IMR-90 (cell line): ENCODE measurements at regions of chr4 and their contacts with region 1.

Region 1: GRCh38 chr4:1346781-1347409 is at the start of gene UVSSA:
- DNase-seq: peak; percentile 99
- ATAC-seq: peak; percentile 91
- H3K4me3 ChIP-seq: peak within 1 kb of the TSS; percentile 84
- H3K27ac ChIP-seq: peak within 1 kb of the TSS; percentile 94
- H3K4me1 ChIP-seq: peaks cover 5% of the 10 kb centered on the region
- H3K27me3 ChIP-seq: no peaks in the 10 kb centered on the region
- CTCF ChIP-seq: no peak
- POLR2A ChIP-seq: no peak; the same call in none of the 2 replicates
- RAD21 ChIP-seq: no peak
- total RNA-seq, gene UVSSA: 1.4 TPM in 2 replicates

Region 2: DNA sequence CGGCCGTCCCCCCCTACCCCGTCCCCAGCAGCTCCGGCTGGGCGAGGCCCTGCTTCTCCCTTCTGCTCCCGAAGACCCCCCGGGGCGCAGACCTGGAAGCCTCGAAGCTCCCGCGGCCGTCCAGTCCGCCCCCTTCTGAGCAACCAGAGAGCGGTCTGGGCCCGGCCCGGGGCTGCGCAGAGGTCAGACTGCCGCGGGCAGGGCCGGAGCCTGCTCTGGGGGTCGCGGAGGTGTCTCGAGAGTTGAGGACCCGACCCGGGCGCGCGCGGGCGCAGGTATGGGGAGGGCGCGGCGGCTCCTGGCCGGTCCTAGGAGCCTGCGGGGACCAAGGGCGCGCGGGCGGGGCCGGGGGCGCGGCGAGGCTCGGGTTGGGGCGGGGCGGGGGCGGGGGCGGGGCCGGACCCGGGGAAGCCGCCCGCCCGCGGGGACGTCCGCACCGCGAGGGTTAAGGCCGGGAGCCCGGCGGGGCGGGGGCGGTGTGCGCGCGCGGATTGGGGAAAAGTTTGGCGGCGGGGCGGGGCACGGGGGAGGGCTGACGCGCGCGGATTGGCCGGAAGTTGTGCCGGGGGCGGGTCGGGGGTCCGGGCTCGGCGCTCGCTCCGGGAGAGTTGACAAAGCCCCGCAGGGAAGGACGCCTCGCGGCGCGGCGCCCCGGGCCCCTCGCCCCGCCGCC is 335.7 kb before region 1 on chr4 and contains the start of gene FGFRL1:
- CTCF ChIA-PET with region 1: no interaction called
- POLR2A ChIA-PET with region 1: no interaction called
- dilution Hi-C with region 1: no loop called
- in situ Hi-C with region 1: no loop called
- intact Hi-C with region 1: loop called (anchors 5 kb)
- DNase-seq: peak; percentile 77
- ATAC-seq: peak; percentile 76
- H3K4me3 ChIP-seq: peak within 1 kb of the TSS; percentile 50
- H3K27ac ChIP-seq: no peak within 1 kb of the TSS; the same call in 1 of the 2 replicates
- H3K4me1 ChIP-seq: peaks cover 13% of the 10 kb centered on the region
- H3K27me3 ChIP-seq: peaks cover 22% of the 10 kb centered on the region
- CTCF ChIP-seq: no peak
- POLR2A ChIP-seq: peak; percentile 62; the same call in 1 of the 2 replicates
- RAD21 ChIP-seq: no peak
- total RNA-seq, gene FGFRL1: 43.3 and 49.3 TPM in 2 replicates

Region 3: DNA sequence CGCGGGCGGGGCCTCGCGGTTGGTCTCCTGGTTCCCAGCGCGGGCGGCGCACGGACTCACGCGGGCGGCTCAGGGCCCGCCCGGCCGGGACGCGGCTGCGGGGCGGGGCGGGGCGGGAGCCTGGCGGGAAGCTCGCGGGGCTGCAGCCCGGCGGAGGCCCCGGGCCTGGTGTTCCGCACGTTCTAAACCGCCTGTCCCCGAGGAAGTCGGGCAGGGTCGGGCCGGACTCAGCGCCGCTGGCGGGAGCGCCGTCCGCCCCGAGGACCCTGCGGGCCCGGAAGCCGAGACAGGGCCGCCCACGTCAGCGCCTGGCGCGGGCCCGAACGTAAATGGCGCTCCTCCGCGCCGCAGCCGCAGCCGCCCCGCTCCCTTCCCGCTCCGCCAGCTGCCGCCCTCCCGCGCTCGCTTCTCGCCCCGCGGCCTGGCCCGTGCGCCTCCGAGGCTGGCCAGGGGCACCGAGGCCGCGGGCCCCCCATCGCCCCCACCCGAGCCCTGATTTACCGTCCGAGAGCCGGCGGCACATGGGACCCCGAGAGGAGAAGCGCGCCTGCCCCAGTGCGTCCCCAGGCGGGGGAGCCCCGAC is 97.7 kb before region 1 on chr4:
- CTCF ChIA-PET with region 1: no interaction called
- POLR2A ChIA-PET with region 1: interaction called, 3 read pairs
- dilution Hi-C with region 1: no loop called
- in situ Hi-C with region 1: no loop called
- intact Hi-C with region 1: loop called (anchors 1 kb)
- DNase-seq: peak; percentile 86
- ATAC-seq: peak; percentile 82
- H3K4me3 ChIP-seq: peak overlapping the region; percentile 62
- H3K27ac ChIP-seq: peak overlapping the region; percentile 80
- H3K4me1 ChIP-seq: peaks cover 19% of the 10 kb centered on the region
- H3K27me3 ChIP-seq: no peaks in the 10 kb centered on the region
- CTCF ChIP-seq: no peak
- POLR2A ChIP-seq: peak; percentile 58; the same call in 1 of the 2 replicates
- RAD21 ChIP-seq: no peak

Region 4: GRCh38 chr4:1309261-1310010 is 37.5 kb before region 1 on chr4:
- CTCF ChIA-PET with region 1: no interaction called
- POLR2A ChIA-PET with region 1: no interaction called
- dilution Hi-C with region 1: no loop called
- in situ Hi-C with region 1: no loop called
- intact Hi-C with region 1: loop called (anchors 2 kb)
- DNase-seq: peak; percentile 94
- ATAC-seq: peak; percentile 100
- H3K4me3 ChIP-seq: peak overlapping the region; percentile 37
- H3K27ac ChIP-seq: peak overlapping the region; percentile 71
- H3K4me1 ChIP-seq: peaks cover 14% of the 10 kb centered on the region
- H3K27me3 ChIP-seq: no peaks in the 10 kb centered on the region
- CTCF ChIP-seq: no peak
- POLR2A ChIP-seq: no peak
- RAD21 ChIP-seq: no peak; the same call in 1 of the 2 replicates